Right ventricle myocardium inferior (tissue), 1 donor: ENCODE measurements at regions of chr2 and their contacts with region 1.

Region 1: DNA sequence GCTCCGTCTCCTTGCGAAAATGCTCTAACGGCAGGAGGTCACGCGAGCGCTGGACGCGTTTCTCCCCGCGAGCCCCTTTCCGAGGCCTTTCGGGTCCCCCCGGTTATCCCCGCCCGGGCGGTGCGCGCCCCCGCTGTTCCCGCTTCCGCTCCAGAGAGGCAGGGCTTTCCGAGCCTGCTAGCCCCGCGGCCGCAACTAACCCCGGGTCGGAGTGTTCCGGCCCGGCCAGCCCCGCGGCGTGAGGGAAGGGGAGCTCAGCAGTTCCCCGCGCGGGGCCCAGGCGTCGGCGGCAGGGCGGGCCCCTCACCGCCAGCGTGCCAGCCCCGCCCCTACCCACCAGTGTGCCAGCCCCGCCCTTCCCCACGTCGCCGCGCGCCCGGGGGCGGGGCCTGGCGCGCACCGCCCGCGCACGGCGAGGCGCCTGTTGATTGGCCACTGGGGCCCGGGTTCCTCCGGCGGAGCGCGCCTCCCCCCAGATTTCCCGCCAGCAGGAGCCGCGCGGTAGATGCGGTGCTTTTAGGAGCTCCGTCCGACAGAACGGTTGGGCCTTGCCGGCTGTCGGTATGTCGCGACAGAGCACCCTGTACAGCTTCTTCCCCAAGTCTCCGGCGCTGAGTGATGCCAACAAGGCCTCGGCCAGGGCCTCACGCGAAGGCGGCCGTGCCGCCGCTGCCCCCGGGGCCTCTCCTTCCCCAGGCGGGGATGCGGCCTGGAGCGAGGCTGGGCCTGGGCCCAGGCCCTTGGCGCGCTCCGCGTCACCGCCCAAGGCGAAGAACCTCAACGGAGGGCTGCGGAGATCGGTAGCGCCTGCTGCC is at the start of gene MSH6:
- DNase-seq: peak; percentile 94
- ATAC-seq: peak; percentile 98
- total RNA-seq, gene MSH6: 25.4 TPM

Region 2: DNA sequence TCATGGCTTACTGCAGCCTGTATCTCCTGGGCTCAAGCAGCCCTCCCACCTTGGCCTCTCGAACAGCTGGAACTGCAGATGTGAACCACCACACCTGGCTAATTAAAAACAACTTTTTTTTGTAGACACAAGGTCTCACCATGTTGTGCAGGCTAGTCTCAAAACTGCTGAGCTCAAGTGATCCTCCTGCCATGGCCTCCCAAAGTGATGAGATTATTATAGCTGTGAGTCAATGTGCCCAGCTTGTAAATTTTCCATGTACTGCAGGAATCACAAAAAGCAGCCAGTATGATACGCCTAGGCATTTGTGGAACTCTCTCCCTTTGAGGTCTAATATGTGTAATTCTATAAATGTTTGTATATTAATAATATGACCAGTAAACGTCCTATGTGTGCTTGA is 60.0 kb after region 1 on chr2:
- intact Hi-C with region 1: no loop called
- DNase-seq: no peak
- ATAC-seq: no peak

Region 3: DNA sequence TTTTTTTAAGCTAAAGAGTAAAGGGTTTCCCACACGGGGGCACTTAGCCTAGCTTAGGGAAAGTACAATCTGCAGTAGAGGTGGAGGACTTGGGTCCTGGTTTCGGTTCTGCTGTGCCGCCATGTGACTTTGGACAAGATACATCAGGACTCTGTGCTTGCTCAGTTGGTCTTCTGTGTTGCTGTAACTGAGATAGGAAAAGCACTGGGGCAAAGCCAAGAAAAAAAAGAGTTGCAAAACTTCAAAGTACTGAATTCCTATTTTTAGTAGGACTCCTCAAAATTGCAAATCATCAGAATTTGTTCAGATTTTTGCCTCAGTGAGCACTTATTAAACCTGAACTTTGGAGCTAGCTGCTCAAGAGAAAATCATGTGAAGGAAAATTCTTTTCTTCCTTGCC is 650.8 kb after region 1 on chr2:
- intact Hi-C with region 1: loop called (anchors 10 kb)
- DNase-seq: no peak
- ATAC-seq: peak; percentile 67